ENCODE measurements at regions of chr1 and their contacts with region 1.

Region 1: GRCh38 chr1:95043141-95043980 is 29.4 kb downstream of the ALG14 start:
- DNase-seq: peak; percentile 65
- H3K4me3 ChIP-seq: no peak overlapping the region
- H3K27ac ChIP-seq: no peak overlapping the region
- H3K4me1 ChIP-seq: peaks cover 21% of the 10 kb centered on the region
- H3K27me3 ChIP-seq: no peaks in the 10 kb centered on the region
- CTCF ChIP-seq: peak; percentile 99

Region 2: GRCh38 chr1:94527447-94528031 is 515.8 kb before region 1 on chr1:
- CTCF ChIA-PET with region 1: no interaction called
- dilution Hi-C with region 1: no loop called
- in situ Hi-C with region 1: loop called in 1 of 2 experiments (anchors 25 kb)
- intact Hi-C with region 1: loop called (anchors 2 kb)
- DNase-seq: peak; percentile 89
- H3K4me3 ChIP-seq: no peak overlapping the region
- H3K27ac ChIP-seq: peak overlapping the region; percentile 8
- H3K4me1 ChIP-seq: no peaks in the 10 kb centered on the region
- H3K27me3 ChIP-seq: no peaks in the 10 kb centered on the region
- CTCF ChIP-seq: peak; percentile 8 to 21

Region 3: GRCh38 chr1:94599095-94599813 is 444.1 kb before region 1 on chr1:
- CTCF ChIA-PET with region 1: no interaction called
- dilution Hi-C with region 1: no loop called
- in situ Hi-C with region 1: no loop called
- intact Hi-C with region 1: loop called (anchors 10 kb)
- DNase-seq: peak; percentile 57
- H3K4me3 ChIP-seq: no peak overlapping the region
- H3K27ac ChIP-seq: no peak overlapping the region
- H3K4me1 ChIP-seq: peaks cover 30% of the 10 kb centered on the region
- H3K27me3 ChIP-seq: no peaks in the 10 kb centered on the region
- CTCF ChIP-seq: peak; percentile 62 to 85

Region 4: DNA sequence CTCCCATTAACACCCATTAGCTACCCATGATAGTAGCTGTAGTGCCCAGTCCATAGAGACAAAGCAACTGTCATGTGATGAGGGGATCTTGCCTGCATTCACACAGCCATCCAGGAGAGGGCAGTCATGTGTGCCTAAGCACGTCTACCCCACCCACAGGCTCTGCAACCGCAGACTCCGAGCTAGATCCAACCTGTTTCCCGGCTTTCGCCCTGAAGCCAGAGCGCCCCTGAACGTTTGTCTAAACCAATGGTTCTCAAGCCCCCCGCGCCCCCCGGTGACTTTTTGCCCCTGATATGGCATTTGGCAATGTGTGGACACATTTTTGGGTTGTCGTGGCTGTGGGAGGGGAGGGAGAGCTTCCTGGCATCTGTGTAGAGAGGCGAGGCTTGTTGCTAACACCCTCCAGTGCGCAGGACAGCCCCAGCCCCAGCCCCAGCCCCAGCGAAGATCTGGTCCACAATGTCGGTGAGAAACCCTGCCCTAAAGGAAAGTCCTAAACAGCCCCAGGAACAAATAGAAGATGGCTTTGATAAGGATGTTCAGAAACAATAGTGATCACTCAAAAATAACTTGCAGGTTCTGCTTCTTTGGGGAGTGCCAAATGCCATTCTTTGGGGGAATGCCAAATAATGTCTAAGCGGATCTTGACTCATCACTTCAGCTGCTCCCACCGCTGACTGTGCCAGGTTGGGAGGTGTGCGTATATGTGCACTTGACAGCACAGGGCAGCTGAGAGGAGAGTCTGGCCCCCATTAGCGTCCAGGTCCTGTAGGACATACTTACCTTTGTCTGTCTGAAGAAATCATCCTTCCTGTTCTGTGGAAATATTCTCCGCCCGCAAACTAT is 188.7 kb before region 1 on chr1:
- CTCF ChIA-PET with region 1: interaction called, 86 read pairs
- dilution Hi-C with region 1: loop called (anchors 25 kb)
- in situ Hi-C with region 1: loop called (anchors 5 kb)
- intact Hi-C with region 1: loop called (anchors 1 kb)
- DNase-seq: peak; percentile 96
- H3K4me3 ChIP-seq: peak overlapping the region; percentile 24 to 49 (median 26)
- H3K27ac ChIP-seq: peak overlapping the region; percentile 56
- H3K4me1 ChIP-seq: peaks cover 21% of the 10 kb centered on the region
- H3K27me3 ChIP-seq: no peaks in the 10 kb centered on the region
- CTCF ChIP-seq: peak; percentile 91 to 96

Region 5: DNA sequence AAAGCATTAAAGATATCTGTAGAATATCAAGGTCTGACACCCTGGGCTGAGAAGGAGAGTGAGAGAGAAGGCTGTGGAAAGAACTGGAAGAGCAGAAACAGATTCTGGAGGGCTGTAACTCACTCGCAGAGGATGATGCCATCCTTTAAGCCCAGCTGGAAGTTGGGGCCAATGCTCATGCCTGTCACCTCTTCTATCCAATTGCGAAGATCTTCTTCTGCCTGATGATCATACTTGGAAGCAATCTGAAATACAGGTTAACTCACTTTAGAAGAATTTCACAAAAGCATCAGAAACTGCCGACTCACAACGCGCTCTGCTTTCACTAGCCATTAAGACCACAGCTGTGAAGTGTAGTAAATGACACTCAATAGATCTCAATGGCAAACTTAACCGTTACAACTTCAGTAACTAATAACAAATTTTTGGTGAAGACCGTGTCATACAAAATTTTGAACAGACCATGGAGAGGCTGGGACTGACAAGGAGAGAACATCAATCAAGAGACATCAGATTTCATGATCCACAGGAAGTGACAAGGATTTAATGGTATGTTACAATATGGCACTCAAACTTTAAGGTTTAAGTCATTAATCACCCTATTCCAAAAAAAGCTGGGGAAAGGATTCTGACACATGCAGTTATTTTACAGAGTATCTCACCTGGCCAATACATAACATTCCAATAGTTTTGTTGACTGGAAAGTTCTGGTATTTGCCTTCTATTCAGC is 139.9 kb before region 1 on chr1:
- CTCF ChIA-PET with region 1: no interaction called
- dilution Hi-C with region 1: no loop called
- in situ Hi-C with region 1: no loop called
- intact Hi-C with region 1: no loop called
- DNase-seq: no peak
- H3K4me3 ChIP-seq: no peak overlapping the region
- H3K27ac ChIP-seq: no peak overlapping the region
- H3K4me1 ChIP-seq: peaks cover 23% of the 10 kb centered on the region
- H3K27me3 ChIP-seq: no peaks in the 10 kb centered on the region
- CTCF ChIP-seq: no peak

Region 6: DNA sequence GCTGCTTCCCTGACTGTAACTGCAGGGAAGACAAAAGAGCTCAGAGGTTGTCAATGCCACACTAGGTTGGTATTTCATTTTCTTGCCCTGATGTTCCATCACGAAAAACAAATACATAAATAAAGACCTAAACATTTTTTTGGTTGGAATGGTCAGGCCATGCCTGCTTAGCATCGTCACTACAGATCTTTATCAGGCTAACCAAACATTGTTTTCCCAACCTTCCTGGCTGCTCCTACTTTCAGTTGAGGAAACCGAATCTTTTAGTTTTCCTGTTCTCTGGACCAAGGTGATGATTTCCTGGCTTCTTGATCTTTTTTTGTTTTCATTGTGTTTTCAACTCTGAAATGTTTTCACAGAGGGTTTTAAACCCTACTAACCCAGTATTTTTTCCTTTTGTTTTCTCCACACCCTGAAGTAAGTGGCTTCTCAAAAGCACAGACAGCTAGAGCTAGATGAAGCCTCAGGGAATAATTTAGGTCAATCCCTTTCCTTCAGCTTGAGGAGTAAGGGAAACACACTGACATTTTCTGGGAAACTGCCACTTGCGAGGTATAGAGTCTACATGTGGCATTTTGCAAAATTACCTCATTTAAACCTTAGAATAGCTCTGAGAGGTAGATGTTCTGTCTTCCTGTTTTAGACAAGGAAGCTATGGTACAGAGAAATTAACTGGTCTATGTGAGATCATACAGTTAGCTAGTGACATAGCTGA is 49.3 kb before region 1 on chr1:
- CTCF ChIA-PET with region 1: interaction called, 13 read pairs
- dilution Hi-C with region 1: no loop called
- in situ Hi-C with region 1: no loop called
- intact Hi-C with region 1: no loop called
- DNase-seq: no peak
- H3K4me3 ChIP-seq: no peak overlapping the region
- H3K27ac ChIP-seq: no peak overlapping the region
- H3K4me1 ChIP-seq: no peaks in the 10 kb centered on the region
- H3K27me3 ChIP-seq: no peaks in the 10 kb centered on the region
- CTCF ChIP-seq: no peak

Region 7: DNA sequence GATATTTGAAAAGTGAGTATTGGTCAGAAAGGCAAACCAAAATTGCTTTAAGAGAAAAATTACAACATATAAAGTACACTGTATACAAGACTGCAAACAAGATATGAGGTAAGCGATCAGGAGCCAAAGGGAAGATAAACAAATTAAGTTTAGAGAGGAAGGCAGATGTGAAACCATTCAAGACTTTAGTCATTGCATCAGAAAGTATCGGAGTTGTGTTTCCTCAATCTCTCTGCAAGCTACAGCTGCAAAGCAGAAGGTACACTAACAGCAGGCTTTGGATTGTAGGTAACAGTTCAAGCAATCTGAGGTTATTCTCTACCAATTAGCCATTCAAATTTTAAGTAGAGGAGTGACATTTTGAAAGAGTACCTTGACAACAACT is 52.5 kb after region 1 on chr1:
- CTCF ChIA-PET with region 1: no interaction called
- dilution Hi-C with region 1: no loop called
- in situ Hi-C with region 1: no loop called
- intact Hi-C with region 1: no loop called
- DNase-seq: no peak
- H3K4me3 ChIP-seq: no peak overlapping the region
- H3K27ac ChIP-seq: no peak overlapping the region
- H3K4me1 ChIP-seq: no peaks in the 10 kb centered on the region
- H3K27me3 ChIP-seq: no peaks in the 10 kb centered on the region
- CTCF ChIP-seq: no peak